SK-N-SH (cell line): ENCODE measurements at regions of chr1 and their contacts with region 1.

Region 1: GRCh38 chr1:202184750-202185460 is 8.7 kb upstream of the LGR6 start:
- DNase-seq: peak; percentile 90
- H3K4me3 ChIP-seq: no peak overlapping the region
- H3K27ac ChIP-seq: no peak overlapping the region
- H3K4me1 ChIP-seq: peaks cover 0 to 4% of the 10 kb centered on the region in 2 experiments; a peak in 1 of 4 replicates
- H3K27me3 ChIP-seq: peaks cover 12% of the 10 kb centered on the region; the same call in 1 of the 2 replicates
- CTCF ChIP-seq: peak; percentile 80
- EP300 ChIP-seq: no peak
- RAD21 ChIP-seq: peak; percentile 70

Region 2: DNA sequence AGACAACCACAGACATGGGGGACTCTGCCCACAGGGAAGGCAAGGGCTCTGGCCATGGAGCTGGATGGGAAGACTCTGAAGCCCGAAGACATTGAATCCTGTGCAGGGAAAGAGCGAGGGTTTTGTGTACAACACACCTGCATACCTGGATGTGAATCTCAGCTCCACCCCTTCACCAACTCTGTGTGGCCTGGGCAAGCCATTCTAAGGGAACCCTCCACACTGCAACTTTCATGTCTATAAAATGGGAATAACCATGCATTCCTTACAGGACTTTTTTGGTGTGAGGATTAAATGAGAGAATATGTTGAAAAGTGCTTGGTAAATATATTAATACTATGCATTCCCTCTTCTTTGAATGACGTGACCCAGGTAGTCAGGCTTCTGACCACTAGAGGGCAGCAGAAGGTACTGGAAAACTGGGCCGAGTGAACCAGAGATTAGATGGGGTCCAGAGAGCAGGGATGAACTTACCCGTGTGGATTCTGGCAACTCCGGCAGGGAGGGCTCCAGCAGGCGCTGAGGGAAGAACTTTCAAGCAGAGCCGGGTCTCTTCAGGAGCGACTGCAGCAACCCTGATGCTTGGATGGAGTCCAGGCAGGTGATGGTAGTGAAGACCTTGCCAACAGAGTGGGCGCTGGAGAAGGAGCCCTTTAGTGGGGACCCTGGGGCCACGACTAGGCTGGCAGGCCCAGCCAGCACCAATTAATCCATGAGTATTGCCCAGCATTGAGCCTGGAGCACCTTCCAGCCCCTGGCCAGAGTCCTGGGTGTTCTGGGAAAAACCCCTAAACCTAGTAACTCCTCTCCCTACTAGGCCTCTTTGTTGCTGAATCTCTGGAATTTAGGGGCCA is 175.4 kb before region 1 on chr1:
- CTCF ChIA-PET with region 1: no interaction called
- POLR2A ChIA-PET with region 1: no interaction called
- DNase-seq: peak; percentile 90
- H3K4me3 ChIP-seq: no peak overlapping the region; a peak in 1 of 4 replicates
- H3K27ac ChIP-seq: no peak overlapping the region
- H3K4me1 ChIP-seq: peaks cover 0 to 3% of the 10 kb centered on the region in 2 experiments; a peak in 1 of 4 replicates
- H3K27me3 ChIP-seq: no peaks in the 10 kb centered on the region
- CTCF ChIP-seq: peak; percentile 96
- EP300 ChIP-seq: no peak
- RAD21 ChIP-seq: peak; percentile 90

Region 3: DNA sequence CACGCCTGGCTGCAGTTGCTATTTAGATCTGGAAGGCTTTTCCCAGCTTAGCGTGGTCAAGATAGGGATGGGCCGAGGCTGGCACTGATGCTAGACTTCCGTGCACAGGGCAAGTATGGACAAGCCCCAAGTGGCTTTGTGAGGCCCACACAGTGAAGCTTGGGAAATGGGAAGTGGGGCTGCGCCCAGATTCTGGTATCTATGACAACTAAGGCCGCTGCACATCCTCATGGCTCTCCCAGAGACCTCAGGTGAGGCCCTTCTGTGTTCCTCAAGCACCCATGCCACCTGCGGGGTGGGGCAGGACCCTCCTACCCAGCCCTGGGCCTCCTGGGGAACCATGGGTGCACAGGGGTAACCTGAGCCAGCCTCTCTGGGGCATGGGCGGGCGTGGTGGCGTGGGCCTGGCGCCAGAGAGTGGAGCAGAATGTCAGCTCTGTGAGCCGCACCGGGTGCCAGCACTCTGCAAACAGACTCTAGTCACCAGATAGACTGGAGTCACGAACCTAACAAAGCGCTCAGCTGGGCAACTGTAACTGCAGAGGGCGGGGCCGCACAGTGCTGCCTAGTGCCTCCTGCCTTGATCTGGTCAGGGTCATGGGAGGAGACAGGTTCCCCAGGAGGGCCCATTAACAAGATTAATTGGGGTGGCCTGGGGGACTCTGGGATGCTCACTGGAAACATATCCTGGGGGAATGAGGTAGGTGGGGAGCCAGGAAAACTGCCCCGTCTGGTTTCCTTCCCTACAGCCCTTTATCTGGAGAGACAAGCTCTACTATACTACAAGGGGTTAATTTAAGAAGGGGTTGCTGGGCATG is 128.1 kb before region 1 on chr1:
- CTCF ChIA-PET with region 1: no interaction called
- POLR2A ChIA-PET with region 1: no interaction called
- DNase-seq: no peak
- H3K4me3 ChIP-seq: no peak overlapping the region
- H3K27ac ChIP-seq: no peak overlapping the region
- H3K4me1 ChIP-seq: no peaks in the 10 kb centered on the region; a peak in 1 of 4 replicates
- H3K27me3 ChIP-seq: no peaks in the 10 kb centered on the region; the same call in 1 of the 2 replicates
- CTCF ChIP-seq: no peak
- EP300 ChIP-seq: no peak
- RAD21 ChIP-seq: no peak

Region 4: GRCh38 chr1:202167708-202168415 is 17.0 kb before region 1 on chr1:
- CTCF ChIA-PET with region 1: interaction called, 22 read pairs
- POLR2A ChIA-PET with region 1: no interaction called
- DNase-seq: peak; percentile 91
- H3K4me3 ChIP-seq: no peak overlapping the region
- H3K27ac ChIP-seq: peak overlapping the region in 1 of 2 experiments; percentile 85; a peak in 2 of 4 replicates
- H3K4me1 ChIP-seq: peaks cover 0 to 58% of the 10 kb centered on the region in 2 experiments; a peak in 1 of 4 replicates
- H3K27me3 ChIP-seq: no peaks in the 10 kb centered on the region
- CTCF ChIP-seq: no peak
- EP300 ChIP-seq: peak in 1 of 2 experiments; percentile 12; a peak in 1 of 4 replicates
- RAD21 ChIP-seq: no peak

Region 5: GRCh38 chr1:202173993-202174392 is 10.9 kb before region 1 on chr1:
- CTCF ChIA-PET with region 1: interaction called, 27 read pairs
- POLR2A ChIA-PET with region 1: no interaction called
- DNase-seq: no peak
- H3K4me3 ChIP-seq: no peak overlapping the region
- H3K27ac ChIP-seq: no peak overlapping the region
- H3K4me1 ChIP-seq: peaks cover 0 to 18% of the 10 kb centered on the region in 2 experiments; a peak in 1 of 4 replicates
- H3K27me3 ChIP-seq: no peaks in the 10 kb centered on the region; the same call in 1 of the 2 replicates
- CTCF ChIP-seq: no peak
- EP300 ChIP-seq: no peak
- RAD21 ChIP-seq: no peak

Region 6: DNA sequence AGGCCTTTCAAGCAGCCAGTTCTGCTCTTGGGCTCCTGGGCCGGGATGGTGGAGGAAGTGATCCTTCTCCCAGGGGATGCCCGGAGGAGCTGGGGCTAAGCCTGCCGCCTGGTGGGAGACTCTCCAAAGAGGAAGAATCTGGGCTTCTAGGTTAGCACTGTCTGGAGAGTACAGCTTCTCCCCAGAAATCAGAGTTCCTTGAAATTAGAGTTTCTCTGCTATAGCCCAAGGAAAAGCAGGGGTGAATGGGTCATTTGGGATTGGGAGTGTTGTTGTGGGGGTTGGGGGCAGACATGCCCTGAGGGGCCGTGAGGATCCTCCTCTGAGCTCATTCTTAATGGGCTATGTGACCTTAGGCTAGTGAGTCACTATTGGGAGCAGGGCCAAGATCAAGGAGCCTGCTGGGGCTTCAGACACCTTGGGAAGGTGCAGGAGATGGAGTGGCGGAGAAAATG is 15.2 kb after region 1 on chr1:
- CTCF ChIA-PET with region 1: interaction called, 14 read pairs
- POLR2A ChIA-PET with region 1: no interaction called
- DNase-seq: no peak
- H3K4me3 ChIP-seq: no peak overlapping the region
- H3K27ac ChIP-seq: no peak overlapping the region
- H3K4me1 ChIP-seq: no peaks in the 10 kb centered on the region
- H3K27me3 ChIP-seq: peaks cover 10% of the 10 kb centered on the region
- CTCF ChIP-seq: no peak
- EP300 ChIP-seq: no peak
- RAD21 ChIP-seq: no peak